ENCODE measurements at regions of chr10 and their contacts with region 1.

Region 1: GRCh38 chr10:121823993-121824463 is 103.8 kb downstream of the ATE1 start:
- DNase-seq: peak; percentile 36
- ATAC-seq: peak; percentile 82
- H3K4me3 ChIP-seq: no peak overlapping the region
- H3K27ac ChIP-seq: no peak overlapping the region
- H3K4me1 ChIP-seq: no peaks in the 10 kb centered on the region
- H3K27me3 ChIP-seq: no peaks in the 10 kb centered on the region
- CTCF ChIP-seq: peak; percentile 55 to 94 (median 83); a peak in 5 of 6 replicates
- POLR2A ChIP-seq: no peak
- RAD21 ChIP-seq: peak; percentile 58

Region 2: DNA sequence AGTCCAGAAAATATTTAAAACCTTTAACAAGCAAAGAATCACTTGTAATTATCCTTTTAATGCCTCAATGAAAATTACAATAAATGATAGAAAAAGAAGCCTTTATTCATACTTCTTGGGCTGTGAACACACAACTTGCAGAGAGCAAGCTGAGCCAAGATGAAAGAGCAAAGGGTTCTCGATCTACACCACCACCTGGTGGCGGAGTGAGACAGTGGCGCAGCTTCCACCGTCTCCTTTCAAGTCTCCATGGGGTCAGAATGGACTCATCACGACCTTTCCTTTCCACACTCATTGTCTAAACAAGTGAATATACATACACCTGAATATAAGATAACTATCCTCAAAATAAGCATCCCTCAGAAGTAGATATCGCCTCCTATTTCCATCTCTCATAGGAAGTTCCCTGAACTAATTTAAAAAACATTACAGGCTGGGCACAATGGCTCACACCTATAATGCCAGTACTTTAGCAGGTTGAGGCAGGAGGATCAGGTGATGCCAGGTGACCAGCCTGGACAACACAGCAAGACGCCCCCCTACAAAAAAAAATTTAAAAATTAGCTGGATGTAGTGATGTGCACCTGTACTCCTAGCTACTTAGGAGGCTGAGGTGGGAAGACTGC is 63.1 kb after region 1 on chr10:
- CTCF ChIA-PET with region 1: interaction called, 12 read pairs
- POLR2A ChIA-PET with region 1: interaction called, 3 read pairs
- RAD21 ChIA-PET with region 1: no interaction called
- intact Hi-C with region 1: no loop called
- DNase-seq: peak; percentile 60
- ATAC-seq: peak; percentile 96
- H3K4me3 ChIP-seq: no peak overlapping the region
- H3K27ac ChIP-seq: no peak overlapping the region
- H3K4me1 ChIP-seq: no peaks in the 10 kb centered on the region
- H3K27me3 ChIP-seq: no peaks in the 10 kb centered on the region
- CTCF ChIP-seq: peak; percentile 80 to 98 (median 92)
- POLR2A ChIP-seq: no peak
- RAD21 ChIP-seq: peak; percentile 88